ENCODE measurements at regions of chr22 and their contacts with region 1.

Region 1: DNA sequence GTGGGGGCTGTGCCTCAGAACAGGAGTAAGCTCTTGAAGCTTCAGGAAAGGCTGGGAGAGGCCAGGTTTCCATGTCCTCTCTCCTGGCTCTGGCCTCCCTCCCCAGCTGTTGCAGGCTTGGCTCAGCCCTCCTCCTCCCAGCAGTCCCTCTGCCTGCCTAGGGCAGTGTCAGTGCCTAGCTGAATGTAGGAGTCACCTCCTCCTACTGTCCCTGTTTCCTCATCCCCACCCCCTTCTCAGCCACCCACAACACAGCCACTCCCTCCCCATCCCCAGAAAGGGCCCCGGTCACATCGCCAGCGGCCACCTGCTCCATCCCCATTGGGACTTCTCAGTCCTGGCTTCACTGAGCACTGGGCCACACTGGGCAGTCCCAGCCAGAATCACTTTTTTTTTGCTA is 2.9 kb upstream of the FBLN1 start:
- DNase-seq: no peak
- H3K4me3 ChIP-seq: no peak overlapping the region
- H3K27ac ChIP-seq: no peak overlapping the region
- H3K4me1 ChIP-seq: no peaks in the 10 kb centered on the region
- H3K27me3 ChIP-seq: peaks cover 2% of the 10 kb centered on the region
- CTCF ChIP-seq: no peak
- POLR2A ChIP-seq: no peak

Region 2: DNA sequence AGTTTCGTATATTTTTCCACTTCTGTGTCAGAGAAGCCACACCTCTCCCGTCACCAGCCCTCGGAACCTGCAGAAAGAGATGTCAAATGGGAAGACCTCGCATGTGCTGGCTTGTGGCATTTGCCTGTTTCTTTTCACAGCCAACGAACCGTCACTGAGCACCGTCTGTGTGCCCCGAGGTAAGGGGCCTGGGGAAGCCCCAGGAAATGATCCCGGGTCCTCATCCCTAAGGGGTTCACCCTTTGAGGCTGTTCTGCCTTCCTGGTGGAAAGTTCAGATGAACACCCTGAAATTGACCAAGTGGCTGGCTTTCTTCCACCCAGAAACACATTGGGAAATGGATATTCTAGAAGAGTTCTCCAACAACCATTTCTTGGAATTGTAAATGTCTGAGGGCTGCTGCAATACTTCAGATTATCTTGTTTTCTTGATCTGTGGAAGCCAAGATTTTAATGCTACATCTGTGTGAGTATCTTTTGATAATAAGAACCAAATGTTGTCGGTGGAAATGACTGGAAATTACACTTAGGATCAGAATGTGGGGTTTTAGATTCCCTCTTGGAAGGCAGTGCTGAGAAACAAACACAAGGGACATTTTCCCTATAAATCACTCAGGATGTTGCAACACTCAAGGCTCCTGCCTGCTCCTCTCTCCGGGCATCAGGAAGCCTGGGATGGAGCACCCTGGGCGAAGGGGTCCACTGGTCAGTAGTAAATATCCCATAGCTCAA is 48.7 kb before region 1 on chr22:
- intact Hi-C with region 1: loop called (anchors 2 kb)
- DNase-seq: peak; percentile 27
- H3K4me3 ChIP-seq: no peak overlapping the region
- H3K27ac ChIP-seq: peak overlapping the region in 1 of 2 donors; percentile 42
- H3K4me1 ChIP-seq: no peaks in the 10 kb centered on the region
- H3K27me3 ChIP-seq: no peaks in the 10 kb centered on the region
- CTCF ChIP-seq: no peak
- POLR2A ChIP-seq: no peak

Region 3: DNA sequence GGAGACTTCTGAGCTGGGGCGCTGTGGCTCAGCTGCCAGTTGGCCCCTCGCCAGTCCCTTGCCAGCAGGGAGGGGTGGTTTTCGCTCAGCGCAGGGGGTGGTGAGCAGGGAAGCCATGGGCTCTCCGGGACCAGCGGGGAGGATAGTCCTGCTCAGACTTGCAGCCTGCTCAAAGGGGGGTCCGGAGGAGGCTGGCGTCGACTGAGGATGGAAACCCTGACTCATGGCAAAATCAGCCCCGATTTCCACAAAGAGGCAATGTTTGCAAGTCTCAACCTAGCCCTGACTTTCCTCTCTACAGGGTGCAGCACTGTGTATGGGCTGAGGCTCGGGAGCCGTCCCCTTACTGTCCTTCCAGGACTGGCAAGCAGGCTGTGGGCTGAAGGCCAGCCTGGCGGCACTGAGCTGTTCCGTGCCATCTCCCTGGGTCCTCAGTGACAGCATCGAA is 38.0 kb after region 1 on chr22:
- intact Hi-C with region 1: loop called (anchors 5 kb)
- DNase-seq: peak; percentile 90
- H3K4me3 ChIP-seq: no peak overlapping the region
- H3K27ac ChIP-seq: peak overlapping the region; percentile 67 to 77
- H3K4me1 ChIP-seq: no peaks in the 10 kb centered on the region
- H3K27me3 ChIP-seq: no peaks in the 10 kb centered on the region
- CTCF ChIP-seq: no peak
- POLR2A ChIP-seq: peak; percentile 42